GM10248 (cell line): ENCODE measurements at regions of chr7 and their contacts with region 1.

Region 1: DNA sequence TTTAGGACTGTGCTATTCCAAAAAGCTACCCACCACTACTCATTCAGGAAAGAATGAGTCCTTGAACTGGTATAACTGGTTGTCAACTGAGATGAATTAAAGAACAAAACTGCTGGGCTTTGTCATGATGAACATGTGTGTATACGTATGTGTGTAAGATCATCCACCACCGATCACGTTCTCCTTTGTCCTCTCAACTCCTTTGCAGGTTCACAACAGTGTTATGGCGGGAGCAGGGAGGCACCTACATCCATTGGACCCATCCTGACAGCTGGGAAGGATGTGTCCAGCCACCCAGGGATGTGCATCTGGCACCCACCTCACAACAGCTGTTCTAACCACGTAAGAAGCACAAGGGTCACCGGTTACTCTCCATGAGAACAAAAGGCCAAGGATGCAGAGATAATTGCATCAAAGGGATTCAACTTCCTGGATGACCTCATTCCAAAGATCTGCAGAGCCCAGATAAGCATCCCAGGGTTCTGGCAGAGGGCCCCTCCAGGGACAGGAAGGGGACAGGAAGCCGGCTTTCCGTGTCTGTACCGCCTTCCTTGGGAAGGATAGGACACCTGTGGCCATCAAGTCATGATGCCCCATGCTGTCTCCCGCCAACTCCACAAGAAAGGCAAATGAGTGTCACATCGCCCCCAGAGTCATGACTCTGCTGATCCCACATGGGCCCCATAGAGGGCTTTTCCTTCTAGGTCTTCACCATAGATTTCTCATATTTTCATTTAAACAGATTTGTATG is 66.1 kb downstream of the STEAP1B start:
- DNase-seq: no peak
- CTCF ChIP-seq: no peak

Region 2: DNA sequence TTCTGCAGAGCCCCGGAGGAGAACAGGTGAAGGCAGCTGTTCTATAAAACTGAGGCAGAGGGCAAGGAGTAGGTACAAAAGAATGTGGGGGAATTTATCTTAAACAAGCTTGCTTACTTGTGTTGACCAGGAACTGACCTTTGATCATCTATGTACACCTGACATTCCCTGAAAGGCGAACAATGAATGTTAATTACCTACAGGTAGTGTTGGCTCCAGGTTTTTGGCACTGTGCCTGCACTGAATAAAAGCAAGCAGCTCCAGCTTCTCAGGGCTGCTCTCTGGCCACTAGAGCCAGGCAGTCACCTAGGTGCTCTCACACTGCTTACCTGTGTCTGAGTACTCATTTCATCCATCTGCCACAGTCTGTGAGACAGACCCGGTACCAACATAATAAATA is 163.9 kb before region 1 on chr7:
- CTCF ChIA-PET with region 1: no interaction called
- POLR2A ChIA-PET with region 1: no interaction called
- DNase-seq: no peak
- CTCF ChIP-seq: no peak

Region 3: DNA sequence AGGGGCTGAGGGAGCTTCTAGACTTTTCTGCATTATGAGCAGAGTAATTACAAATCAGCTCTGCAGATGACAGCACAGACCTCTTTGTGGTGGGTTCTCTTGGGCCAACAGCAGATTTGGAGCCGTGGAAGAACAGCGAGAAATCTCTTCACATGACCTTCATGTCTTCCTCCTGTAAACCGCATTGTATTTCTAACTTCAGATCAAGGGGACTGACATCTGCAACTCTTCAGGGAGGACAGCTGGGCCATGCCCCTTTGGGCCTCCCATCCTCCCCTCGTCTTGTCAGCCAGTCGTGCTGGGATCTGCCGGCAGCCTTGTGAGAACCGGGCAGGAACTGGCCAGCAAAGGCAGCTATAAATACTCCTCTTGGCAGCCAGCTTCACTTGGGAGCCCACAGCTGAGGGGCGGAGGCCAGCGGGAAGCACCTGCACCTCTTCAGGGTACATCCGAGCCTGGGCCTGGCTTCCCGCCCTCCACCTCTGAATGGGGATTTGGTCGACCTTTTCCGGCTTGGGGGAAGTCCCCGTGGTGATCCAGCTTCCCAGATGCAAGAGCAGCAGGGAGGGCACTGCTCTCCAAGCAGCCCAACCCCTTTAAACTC is 11.4 kb after region 1 on chr7:
- CTCF ChIA-PET with region 1: interaction called, 14 read pairs
- POLR2A ChIA-PET with region 1: interaction called, 4 read pairs
- DNase-seq: peak; percentile 38
- CTCF ChIP-seq: no peak

Region 4: DNA sequence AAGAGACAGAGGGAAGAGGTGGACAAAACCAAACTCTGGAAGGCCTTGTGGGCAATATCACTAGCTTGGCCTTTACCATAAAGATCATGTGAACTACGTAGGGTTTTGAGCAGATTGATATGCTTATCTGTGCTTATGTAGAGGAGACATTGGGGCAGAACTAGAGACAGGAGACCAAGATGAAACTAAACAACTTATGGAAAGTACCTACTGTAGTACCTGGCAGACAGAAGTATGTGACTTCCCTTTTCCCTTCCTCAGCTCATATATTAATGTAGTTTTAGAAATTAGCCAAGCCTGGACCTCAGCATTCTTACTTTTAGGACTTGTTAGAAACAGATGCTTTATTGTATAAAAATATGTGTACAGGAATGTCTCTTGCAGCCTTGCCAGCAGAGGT is 279.1 kb after region 1 on chr7:
- CTCF ChIA-PET with region 1: no interaction called
- POLR2A ChIA-PET with region 1: no interaction called
- DNase-seq: no peak
- CTCF ChIP-seq: no peak